Left ventricle myocardium inferior (tissue), 1 donor: ENCODE measurements at regions of chr22 and their contacts with region 1.

Region 1: GRCh38 chr22:42814215-42814614 is 42.9 kb downstream of the ARFGAP3 start:
- DNase-seq: no peak
- H3K4me3 ChIP-seq: no peak overlapping the region
- H3K27ac ChIP-seq: no peak overlapping the region
- H3K4me1 ChIP-seq: peaks cover 15% of the 10 kb centered on the region
- H3K27me3 ChIP-seq: no peaks in the 10 kb centered on the region
- CTCF ChIP-seq: no peak

Region 2: GRCh38 chr22:42662114-42663021 is 151.8 kb before region 1 on chr22:
- intact Hi-C with region 1: loop called (anchors 10 kb)
- DNase-seq: peak; percentile 85
- H3K4me3 ChIP-seq: peak overlapping the region; percentile 70
- H3K27ac ChIP-seq: peak overlapping the region; percentile 60
- H3K4me1 ChIP-seq: peaks cover 14% of the 10 kb centered on the region
- H3K27me3 ChIP-seq: no peaks in the 10 kb centered on the region
- CTCF ChIP-seq: peak; percentile 82

Region 3: DNA sequence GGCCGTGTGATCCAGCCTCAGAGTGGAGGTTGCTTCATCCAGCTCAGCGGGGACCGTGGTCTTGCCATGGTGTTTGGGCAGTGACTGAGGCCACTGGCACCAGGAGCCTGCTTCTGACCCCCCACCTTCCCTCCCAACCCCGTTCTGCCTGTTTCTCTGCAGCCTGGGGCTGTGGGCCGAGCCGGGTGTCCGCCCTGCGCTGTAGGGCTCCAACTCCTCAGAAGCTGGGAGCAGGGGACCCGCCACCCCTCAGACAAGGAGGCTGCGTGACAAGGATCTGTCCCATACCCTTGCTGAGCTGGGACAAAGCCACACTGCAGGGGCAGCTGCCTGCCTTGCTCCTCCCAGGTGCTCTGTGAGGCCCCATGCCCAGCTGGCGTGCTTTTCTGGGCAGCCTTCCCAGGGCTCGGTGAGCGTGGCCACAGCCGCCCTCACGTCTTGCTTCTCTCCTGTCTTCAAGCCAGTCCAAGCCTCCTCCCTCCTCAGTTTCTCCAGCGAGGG is 54.6 kb after region 1 on chr22:
- intact Hi-C with region 1: no loop called
- DNase-seq: peak; percentile 72
- H3K4me3 ChIP-seq: no peak overlapping the region
- H3K27ac ChIP-seq: peak overlapping the region; percentile 73
- H3K4me1 ChIP-seq: peaks cover 24% of the 10 kb centered on the region
- H3K27me3 ChIP-seq: no peaks in the 10 kb centered on the region
- CTCF ChIP-seq: no peak